T-cell (primary cell): ENCODE measurements at regions of chr3 and their contacts with region 1.

Region 1: DNA sequence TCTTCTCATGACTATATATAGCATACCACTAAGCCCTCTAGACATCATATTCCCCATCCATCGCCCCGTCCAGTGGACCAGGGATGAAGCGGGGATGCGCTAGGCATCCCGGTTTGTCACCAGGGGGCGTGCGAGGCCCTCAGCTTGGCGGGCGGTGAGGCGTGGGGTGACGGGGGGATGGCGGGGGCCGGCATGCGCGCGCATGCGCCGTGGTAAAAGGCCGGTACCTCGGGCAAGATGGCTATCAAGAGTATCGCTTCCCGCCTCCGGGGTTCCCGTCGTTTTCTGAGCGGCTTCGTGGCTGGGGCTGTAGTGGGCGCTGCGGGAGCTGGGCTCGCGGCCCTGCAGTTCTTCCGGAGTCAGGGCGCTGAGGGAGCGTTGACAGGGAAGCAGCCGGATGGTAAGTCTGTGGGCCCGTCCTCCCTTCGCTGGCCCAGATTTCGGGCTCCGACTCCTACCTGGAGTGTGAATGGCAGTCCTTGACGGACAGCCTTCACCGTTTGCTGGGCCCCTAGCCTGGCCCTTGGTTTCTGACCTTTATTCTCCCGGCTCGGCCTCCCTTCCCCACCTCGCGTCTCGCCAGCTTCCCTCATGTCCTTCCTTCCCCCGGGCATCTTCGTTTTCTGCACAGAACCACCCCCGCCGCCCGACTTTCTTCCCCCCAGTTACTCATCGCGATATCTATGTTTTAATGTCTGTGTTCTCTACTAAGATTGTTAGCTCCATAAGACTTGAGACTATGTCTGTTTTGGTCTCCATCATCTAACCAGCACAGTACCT is at the start of gene EXOG:
- DNase-seq: peak; percentile 86 to 96 (median 92)
- ATAC-seq: peak; percentile 91 to 97 (median 92)
- H3K4me3 ChIP-seq: peak within 1 kb of the TSS; percentile 78 to 96
- H3K4me3 Mint-ChIP-seq: peak within 1 kb of the TSS; percentile 96 to 97 (median 97)
- H3K27ac ChIP-seq: peak within 1 kb of the TSS; percentile 52
- H3K27ac Mint-ChIP-seq: peak within 1 kb of the TSS; percentile 71 to 90
- H3K4me1 ChIP-seq: peaks cover 2 to 14% of the 10 kb centered on the region in 2 experiments
- H3K4me1 Mint-ChIP-seq: peaks cover 23 to 31% (median 24%) of the 10 kb centered on the region in 3 donors
- H3K27me3 ChIP-seq: no peaks in the 10 kb centered on the region
- H3K27me3 Mint-ChIP-seq: no peaks in the 10 kb centered on the region
- total RNA-seq, gene EXOG: 21.5 to 24.8 (median 22.9) TPM

Region 2: DNA sequence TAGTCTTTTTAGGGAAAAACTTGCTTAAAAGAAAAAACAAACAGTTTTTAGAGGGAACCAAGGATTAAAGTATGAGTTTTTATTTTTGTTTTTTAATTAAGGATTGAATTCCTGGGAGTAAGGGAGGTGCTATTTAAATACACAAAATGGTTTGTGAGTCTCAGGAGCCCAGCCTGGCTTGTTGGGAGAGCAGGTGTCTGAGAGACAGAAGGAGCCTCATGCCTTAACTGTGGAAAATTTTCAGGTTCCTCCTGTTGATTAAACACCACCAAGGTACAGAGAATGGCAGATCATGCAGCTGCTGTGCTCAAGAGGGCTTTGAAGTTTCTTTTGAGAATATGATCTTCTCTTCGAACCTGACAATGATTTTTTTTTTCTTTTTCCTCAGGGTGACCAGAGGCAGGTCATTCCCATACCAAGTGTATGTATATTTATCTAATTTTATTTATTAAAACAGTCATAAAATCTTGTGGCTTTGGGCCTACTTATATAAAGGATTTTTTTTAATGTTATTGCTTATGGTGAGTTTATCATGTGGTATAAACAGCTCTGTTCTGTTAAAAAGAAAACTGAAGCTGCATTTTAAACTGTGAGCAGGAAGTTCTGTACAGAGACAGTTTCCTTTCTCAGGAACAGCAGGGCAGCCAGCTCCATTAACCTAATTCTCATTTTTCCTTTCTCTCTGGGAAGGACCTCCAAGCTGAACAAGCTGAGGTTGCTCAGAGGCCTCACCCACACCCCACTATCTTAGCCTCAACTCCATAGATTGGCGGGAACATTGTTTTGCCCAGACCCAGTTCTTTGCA is 539.4 kb before region 1 on chr3:
- CTCF ChIA-PET with region 1: interaction called in 1 of 2 experiments, 3 read pairs
- POLR2A ChIA-PET with region 1: interaction called in 1 of 2 experiments, 10 read pairs
- DNase-seq: peak in 1 of 35 experiments; percentile 19
- ATAC-seq: peak; percentile 63 to 74 (median 64)
- H3K4me3 ChIP-seq: peak overlapping the region in 1 of 2 donors; percentile 15
- H3K4me3 Mint-ChIP-seq: peak overlapping the region in 1 of 3 donors; percentile 69
- H3K27ac ChIP-seq: peak overlapping the region; percentile 64
- H3K27ac Mint-ChIP-seq: peak overlapping the region; percentile 92 to 96
- H3K4me1 ChIP-seq: peaks cover 17 to 21% of the 10 kb centered on the region in 2 experiments
- H3K4me1 Mint-ChIP-seq: peaks cover 26 to 31% (median 29%) of the 10 kb centered on the region in 3 donors
- H3K27me3 ChIP-seq: no peaks in the 10 kb centered on the region
- H3K27me3 Mint-ChIP-seq: no peaks in the 10 kb centered on the region

Region 3: GRCh38 chr3:38548159-38548931 is 52.0 kb after region 1 on chr3:
- CTCF ChIA-PET with region 1: no interaction called
- POLR2A ChIA-PET with region 1: no interaction called
- DNase-seq: no peak
- ATAC-seq: no peak
- H3K4me3 ChIP-seq: no peak overlapping the region
- H3K4me3 Mint-ChIP-seq: no peak overlapping the region
- H3K27ac ChIP-seq: no peak overlapping the region
- H3K27ac Mint-ChIP-seq: no peak overlapping the region
- H3K4me1 ChIP-seq: no peaks in the 10 kb centered on the region
- H3K4me1 Mint-ChIP-seq: no peaks in the 10 kb centered on the region
- H3K27me3 ChIP-seq: no peaks in the 10 kb centered on the region
- H3K27me3 Mint-ChIP-seq: peaks cover 0 to 5% of the 10 kb centered on the region in 2 donors